GM12878 (cell line): ENCODE measurements at regions of chr19 and their contacts with region 1.

Region 1: GRCh38 chr19:49451430-49452181 is at the start of gene PIH1D1:
- DNase-seq: peak; percentile 99
- ATAC-seq: peak; percentile 77
- H3K4me3 ChIP-seq: peak within 1 kb of the TSS; percentile 85
- H3K27ac ChIP-seq: peak within 1 kb of the TSS; percentile 100
- H3K4me1 ChIP-seq: peaks cover 12% of the 10 kb centered on the region
- H3K27me3 ChIP-seq: no peaks in the 10 kb centered on the region
- CTCF ChIP-seq: no peak
- EP300 ChIP-seq: no peak
- POLR2A ChIP-seq: peak; percentile 80
- RAD21 ChIP-seq: no peak
- polyA plus RNA-seq, gene PIH1D1: 16.1 to 39.9 TPM

Region 2: DNA sequence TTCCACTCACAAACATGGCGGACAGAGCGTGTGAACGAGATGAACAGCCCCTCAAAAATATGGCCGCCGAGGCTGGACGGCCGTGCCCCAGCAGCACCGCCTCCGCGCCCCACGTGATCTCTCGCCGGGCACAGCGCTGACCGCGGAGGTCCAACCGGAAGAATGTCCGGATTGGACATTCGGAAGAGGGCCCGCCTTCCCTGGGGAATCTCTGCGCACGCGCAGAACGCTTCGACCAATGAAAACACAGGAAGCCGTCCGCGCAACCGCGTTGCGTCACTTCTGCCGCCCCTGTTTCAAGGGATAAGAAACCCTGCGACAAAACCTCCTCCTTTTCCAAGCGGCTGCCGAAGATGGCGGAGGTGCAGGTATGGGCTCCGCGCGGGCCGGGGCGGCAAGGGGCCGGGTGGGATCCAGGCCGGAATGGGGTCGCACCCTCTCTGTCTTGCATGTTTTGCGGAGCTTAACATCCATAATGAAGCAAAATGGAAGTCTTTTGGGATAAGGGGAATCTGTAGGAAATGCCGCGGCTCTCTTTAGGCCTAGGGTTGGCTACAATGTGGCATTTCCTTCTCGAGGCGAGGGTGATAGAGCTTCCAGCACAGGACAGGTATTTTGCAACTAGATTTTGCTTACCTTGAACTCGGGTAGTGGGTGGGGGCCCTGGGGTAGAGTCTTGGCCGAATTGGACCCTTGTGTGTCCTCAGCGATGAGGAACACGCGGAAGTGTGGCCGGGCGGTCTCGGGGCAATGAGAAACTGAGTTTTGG is 35.9 kb after region 1 on chr19 and contains the start of gene RPL13A:
- CTCF ChIA-PET with region 1: interaction called, 5 read pairs
- POLR2A ChIA-PET with region 1: interaction called, 44 read pairs
- RAD21 ChIA-PET with region 1: no interaction called
- SMC1A ChIA-PET with region 1: no interaction called
- in situ Hi-C with region 1: no loop called
- intact Hi-C with region 1: loop called (anchors 1 kb)
- DNase-seq: peak; percentile 98
- ATAC-seq: peak; percentile 92
- H3K4me3 ChIP-seq: peak within 1 kb of the TSS; percentile 97
- H3K27ac ChIP-seq: peak within 1 kb of the TSS; percentile 83
- H3K4me1 ChIP-seq: peaks cover 16% of the 10 kb centered on the region
- H3K27me3 ChIP-seq: no peaks in the 10 kb centered on the region
- CTCF ChIP-seq: no peak
- EP300 ChIP-seq: no peak
- POLR2A ChIP-seq: peak; percentile 100
- RAD21 ChIP-seq: no peak
- polyA plus RNA-seq, gene RPL13A: 4,595 to 5,196 TPM

Region 3: DNA sequence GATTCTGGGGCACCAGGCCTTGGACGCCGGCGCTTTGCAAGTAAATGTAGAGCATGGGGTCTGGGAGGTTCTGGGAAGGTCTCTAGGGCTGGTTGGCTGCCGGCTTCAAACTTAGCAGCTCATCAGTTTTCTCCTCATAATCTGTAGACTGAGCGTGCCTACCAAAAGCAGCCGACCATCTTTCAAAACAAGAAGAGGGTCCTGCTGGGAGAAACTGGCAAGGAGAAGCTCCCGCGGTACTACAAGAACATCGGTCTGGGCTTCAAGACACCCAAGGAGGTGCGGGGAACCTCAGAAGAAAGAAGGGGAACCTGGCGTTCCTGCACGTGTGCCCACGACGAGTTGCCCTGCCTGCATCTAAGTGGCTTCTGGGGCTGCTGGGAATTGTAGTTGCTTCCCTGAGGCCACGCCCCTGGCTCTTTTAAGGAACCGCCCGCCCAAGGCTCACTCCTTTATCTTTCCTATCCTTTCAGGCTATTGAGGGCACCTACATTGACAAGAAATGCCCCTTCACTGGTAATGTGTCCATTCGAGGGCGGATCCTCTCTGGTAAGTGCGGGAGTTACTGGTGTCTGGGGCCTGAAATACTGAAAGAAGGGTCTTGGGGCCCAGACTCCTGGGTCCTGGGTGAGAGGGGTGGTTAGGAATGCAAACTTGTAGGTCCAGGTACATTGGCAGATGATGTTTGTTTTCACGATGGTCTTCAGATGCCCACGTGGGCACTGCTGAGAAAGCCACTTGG is 45.6 kb after region 1 on chr19:
- CTCF ChIA-PET with region 1: no interaction called
- POLR2A ChIA-PET with region 1: interaction called, 44 read pairs
- RAD21 ChIA-PET with region 1: interaction called, 3 read pairs
- SMC1A ChIA-PET with region 1: no interaction called
- in situ Hi-C with region 1: no loop called
- intact Hi-C with region 1: no loop called
- DNase-seq: no peak
- ATAC-seq: peak; percentile 41
- H3K4me3 ChIP-seq: peak overlapping the region; percentile 79
- H3K27ac ChIP-seq: peak overlapping the region; percentile 85
- H3K4me1 ChIP-seq: peaks cover 35% of the 10 kb centered on the region
- H3K27me3 ChIP-seq: no peaks in the 10 kb centered on the region
- CTCF ChIP-seq: no peak
- EP300 ChIP-seq: no peak
- POLR2A ChIP-seq: peak; percentile 74
- RAD21 ChIP-seq: no peak

Region 4: GRCh38 chr19:49533551-49534488 is 82.2 kb after region 1 on chr19:
- CTCF ChIA-PET with region 1: no interaction called
- POLR2A ChIA-PET with region 1: no interaction called
- RAD21 ChIA-PET with region 1: no interaction called
- SMC1A ChIA-PET with region 1: no interaction called
- in situ Hi-C with region 1: no loop called
- intact Hi-C with region 1: no loop called
- DNase-seq: peak; percentile 19
- ATAC-seq: peak; percentile 95
- H3K4me3 ChIP-seq: peak overlapping the region; percentile 68
- H3K27ac ChIP-seq: no peak overlapping the region
- H3K4me1 ChIP-seq: peaks cover 10% of the 10 kb centered on the region
- H3K27me3 ChIP-seq: peaks cover 2 to 4% of the 10 kb centered on the region in 2 experiments; a peak in 3 of 4 replicates
- CTCF ChIP-seq: peak; percentile 7 to 42 (median 37); a peak in 4 of 6 replicates
- EP300 ChIP-seq: no peak
- POLR2A ChIP-seq: no peak
- RAD21 ChIP-seq: no peak